ENCODE measurements at regions of chr2 and their contacts with region 1.

Region 1: DNA sequence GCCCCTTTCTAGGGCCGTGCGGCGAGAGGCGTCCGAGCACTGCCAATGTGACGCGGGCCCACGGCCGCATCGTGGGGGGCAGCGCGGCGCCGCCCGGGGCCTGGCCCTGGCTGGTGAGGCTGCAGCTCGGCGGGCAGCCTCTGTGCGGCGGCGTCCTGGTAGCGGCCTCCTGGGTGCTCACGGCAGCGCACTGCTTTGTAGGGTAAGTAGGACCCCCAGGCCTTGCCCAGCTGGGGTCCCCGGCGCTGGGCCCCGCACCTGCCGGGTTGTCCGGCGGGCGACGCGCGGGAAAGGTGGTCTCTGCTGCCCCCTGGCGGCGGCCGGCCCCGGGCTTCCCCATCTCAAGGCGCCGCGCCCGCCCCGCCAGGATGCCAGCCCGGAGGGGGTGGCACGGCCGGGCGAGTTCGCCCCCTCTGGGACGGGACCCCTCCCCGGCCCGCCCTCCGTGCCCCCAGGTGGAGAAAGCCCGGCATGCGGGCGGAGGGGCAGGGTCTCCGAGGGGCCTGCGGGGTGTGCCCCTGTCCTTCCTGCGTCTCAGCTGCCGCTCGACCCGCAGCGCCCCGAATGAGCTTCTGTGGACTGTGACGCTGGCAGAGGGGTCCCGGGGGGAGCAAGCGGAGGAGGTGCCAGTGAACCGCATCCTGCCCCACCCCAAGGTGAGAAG is 1.9 kb downstream of the PRSS56 start:
- H3K4me3 Mint-ChIP-seq: peak overlapping the region; percentile 27
- H3K27ac Mint-ChIP-seq: no peak overlapping the region
- H3K4me1 Mint-ChIP-seq: peaks cover 30% of the 10 kb centered on the region
- H3K27me3 Mint-ChIP-seq: peaks cover 70% of the 10 kb centered on the region

Region 2: DNA sequence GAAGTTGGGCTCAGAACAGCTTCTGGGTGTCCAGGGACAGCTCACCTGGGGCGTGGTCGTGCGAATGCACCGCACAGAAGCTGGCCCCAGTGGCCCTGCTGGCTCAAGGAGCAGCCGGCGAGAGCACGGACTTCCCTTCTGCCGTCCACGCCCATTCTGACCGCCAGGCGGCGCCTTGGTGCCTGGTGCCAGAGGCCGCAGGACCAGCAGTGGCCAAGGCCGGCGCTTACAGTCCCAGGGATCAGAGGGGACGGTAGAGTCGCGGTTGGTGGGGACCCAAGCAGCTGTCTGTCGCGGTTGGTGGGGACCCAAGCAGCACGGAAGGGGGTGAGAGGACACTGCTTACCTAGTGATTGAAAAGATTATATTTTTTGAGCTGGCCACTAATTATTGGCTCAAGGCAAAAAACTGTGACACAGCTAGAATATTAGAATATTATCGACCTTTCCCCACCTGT is 621.6 kb before region 1 on chr2:
- intact Hi-C with region 1: loop called (anchors 10 kb)
- H3K4me3 Mint-ChIP-seq: no peak overlapping the region
- H3K27ac Mint-ChIP-seq: no peak overlapping the region
- H3K4me1 Mint-ChIP-seq: peaks cover 5% of the 10 kb centered on the region
- H3K27me3 Mint-ChIP-seq: peaks cover 9% of the 10 kb centered on the region

Region 3: GRCh38 chr2:232398293-232399034 is 123.6 kb before region 1 on chr2:
- intact Hi-C with region 1: no loop called
- H3K4me3 Mint-ChIP-seq: no peak overlapping the region
- H3K27ac Mint-ChIP-seq: no peak overlapping the region
- H3K4me1 Mint-ChIP-seq: no peaks in the 10 kb centered on the region
- H3K27me3 Mint-ChIP-seq: peaks cover 9% of the 10 kb centered on the region

Region 4: GRCh38 chr2:232444409-232445148 is 77.5 kb before region 1 on chr2:
- intact Hi-C with region 1: loop called (anchors 5 kb)
- H3K4me3 Mint-ChIP-seq: no peak overlapping the region
- H3K27ac Mint-ChIP-seq: no peak overlapping the region
- H3K4me1 Mint-ChIP-seq: peaks cover 16% of the 10 kb centered on the region
- H3K27me3 Mint-ChIP-seq: peaks cover 23% of the 10 kb centered on the region

Region 5: GRCh38 chr2:232537079-232537478 is 15.0 kb after region 1 on chr2:
- intact Hi-C with region 1: no loop called
- H3K4me3 Mint-ChIP-seq: no peak overlapping the region
- H3K27ac Mint-ChIP-seq: no peak overlapping the region
- H3K4me1 Mint-ChIP-seq: peaks cover 60% of the 10 kb centered on the region
- H3K27me3 Mint-ChIP-seq: peaks cover 8% of the 10 kb centered on the region

Measured in dendritic cell treated with granulocyte-macrophage colony-stimulating factor and Interleukin-4, amounts not matched to agents 40 ng/mL and 50 ng/mL, for 4 days (primary cell).